Activated CD4-positive, alpha-beta memory T cell treated with anti-CD3 and anti-CD28 coated beads for 36 hours (primary cell): ENCODE measurements at regions of chr7 and their contacts with region 1.

Region 1: GRCh38 chr7:139431010-139431409 is 52.5 kb downstream of the KLRG2 start:
- DNase-seq: no peak
- H3K4me3 Mint-ChIP-seq: no peak overlapping the region
- H3K27ac Mint-ChIP-seq: no peak overlapping the region
- H3K4me1 Mint-ChIP-seq: peaks cover 4% of the 10 kb centered on the region
- H3K27me3 Mint-ChIP-seq: no peaks in the 10 kb centered on the region

Region 2: GRCh38 chr7:139394540-139394939 is 36.5 kb before region 1 on chr7:
- CTCF ChIA-PET with region 1: interaction called, 10 read pairs
- POLR2A ChIA-PET with region 1: no interaction called
- intact Hi-C with region 1: no loop called
- DNase-seq: no peak
- H3K4me3 Mint-ChIP-seq: no peak overlapping the region
- H3K27ac Mint-ChIP-seq: peak overlapping the region; percentile 40
- H3K4me1 Mint-ChIP-seq: peaks cover 38% of the 10 kb centered on the region
- H3K27me3 Mint-ChIP-seq: no peaks in the 10 kb centered on the region

Region 3: GRCh38 chr7:139407555-139407954 is 23.5 kb before region 1 on chr7:
- CTCF ChIA-PET with region 1: interaction called, 15 read pairs
- POLR2A ChIA-PET with region 1: no interaction called
- intact Hi-C with region 1: no loop called
- DNase-seq: no peak
- H3K4me3 Mint-ChIP-seq: no peak overlapping the region
- H3K27ac Mint-ChIP-seq: no peak overlapping the region
- H3K4me1 Mint-ChIP-seq: peaks cover 2% of the 10 kb centered on the region
- H3K27me3 Mint-ChIP-seq: no peaks in the 10 kb centered on the region

Region 4: DNA sequence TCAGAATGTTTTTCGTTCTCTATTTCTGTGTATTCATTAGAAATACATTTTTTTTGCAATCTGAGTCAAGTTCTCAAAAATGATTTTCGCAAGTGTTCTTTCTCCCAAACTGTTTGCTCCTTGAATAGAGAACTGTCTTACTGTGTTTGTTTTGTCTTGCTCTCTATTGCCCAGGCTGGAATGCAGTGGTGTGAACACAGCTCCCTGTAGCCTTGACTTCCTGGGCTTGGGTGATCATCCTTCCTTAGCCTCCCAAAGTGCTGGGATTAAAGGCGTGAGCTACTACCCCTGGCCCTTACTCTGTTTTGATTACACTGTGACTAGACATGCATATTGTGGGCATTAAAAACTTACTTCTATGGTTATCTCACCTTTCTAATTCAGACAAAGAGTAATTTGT is 14.6 kb before region 1 on chr7:
- CTCF ChIA-PET with region 1: interaction called, 43 read pairs
- POLR2A ChIA-PET with region 1: no interaction called
- intact Hi-C with region 1: no loop called
- DNase-seq: no peak
- H3K4me3 Mint-ChIP-seq: no peak overlapping the region
- H3K27ac Mint-ChIP-seq: no peak overlapping the region
- H3K4me1 Mint-ChIP-seq: no peaks in the 10 kb centered on the region
- H3K27me3 Mint-ChIP-seq: no peaks in the 10 kb centered on the region

Region 5: GRCh38 chr7:139452958-139453672 is 22.1 kb after region 1 on chr7:
- CTCF ChIA-PET with region 1: interaction called, 10 read pairs
- POLR2A ChIA-PET with region 1: no interaction called
- intact Hi-C with region 1: no loop called
- DNase-seq: no peak
- H3K4me3 Mint-ChIP-seq: no peak overlapping the region
- H3K27ac Mint-ChIP-seq: no peak overlapping the region
- H3K4me1 Mint-ChIP-seq: no peaks in the 10 kb centered on the region
- H3K27me3 Mint-ChIP-seq: no peaks in the 10 kb centered on the region

Region 6: DNA sequence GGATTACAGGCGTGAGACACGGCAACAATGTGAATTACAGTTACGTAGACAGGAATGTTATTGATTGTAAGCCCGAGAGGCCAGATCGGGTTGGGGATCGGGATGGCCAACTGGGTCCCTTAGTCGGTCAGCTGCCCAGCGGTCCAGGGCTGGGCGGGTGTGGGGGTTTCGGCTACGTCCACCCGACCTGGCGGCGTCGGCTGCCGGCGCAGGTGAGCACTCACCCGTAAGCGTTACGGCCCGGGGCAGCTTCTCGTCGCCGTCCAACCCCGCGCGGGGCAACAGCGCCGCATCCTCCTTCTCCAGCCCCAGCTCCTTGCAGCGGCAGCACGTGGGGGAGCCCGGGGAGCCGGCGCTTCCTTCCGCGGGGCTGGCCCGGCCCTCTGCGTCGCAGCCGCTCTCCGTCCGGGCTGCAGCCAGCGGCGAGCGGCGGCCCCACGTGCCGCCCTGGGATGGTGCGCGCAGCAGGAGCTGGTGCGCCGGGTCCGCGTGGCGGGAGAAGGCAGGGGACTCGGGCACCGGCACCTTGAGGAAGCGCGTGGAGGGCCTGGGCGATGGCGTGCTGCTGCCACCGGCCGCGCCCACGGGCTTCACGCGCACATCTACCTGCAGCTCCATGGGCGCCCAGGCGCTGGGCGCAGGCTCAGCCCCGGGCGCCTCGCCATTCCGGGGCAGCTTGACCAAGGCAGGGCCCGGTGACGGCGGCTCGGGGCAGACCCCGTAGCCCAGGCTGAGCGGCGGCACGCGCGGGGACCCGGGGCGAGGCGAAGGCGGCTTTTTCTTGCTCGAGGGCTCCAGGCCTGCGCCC is 51.9 kb after region 1 on chr7:
- CTCF ChIA-PET with region 1: interaction called, 10 read pairs
- POLR2A ChIA-PET with region 1: interaction called, 3 read pairs
- intact Hi-C with region 1: no loop called
- DNase-seq: peak; percentile 29
- H3K4me3 Mint-ChIP-seq: peak overlapping the region; percentile 32
- H3K27ac Mint-ChIP-seq: no peak overlapping the region
- H3K4me1 Mint-ChIP-seq: peaks cover 4% of the 10 kb centered on the region
- H3K27me3 Mint-ChIP-seq: peaks cover 27% of the 10 kb centered on the region

Region 7: GRCh38 chr7:139610595-139610994 is 179.6 kb after region 1 on chr7:
- CTCF ChIA-PET with region 1: no interaction called
- POLR2A ChIA-PET with region 1: no interaction called
- intact Hi-C with region 1: no loop called
- DNase-seq: no peak
- H3K4me3 Mint-ChIP-seq: no peak overlapping the region
- H3K27ac Mint-ChIP-seq: no peak overlapping the region
- H3K4me1 Mint-ChIP-seq: no peaks in the 10 kb centered on the region
- H3K27me3 Mint-ChIP-seq: no peaks in the 10 kb centered on the region

Region 8: DNA sequence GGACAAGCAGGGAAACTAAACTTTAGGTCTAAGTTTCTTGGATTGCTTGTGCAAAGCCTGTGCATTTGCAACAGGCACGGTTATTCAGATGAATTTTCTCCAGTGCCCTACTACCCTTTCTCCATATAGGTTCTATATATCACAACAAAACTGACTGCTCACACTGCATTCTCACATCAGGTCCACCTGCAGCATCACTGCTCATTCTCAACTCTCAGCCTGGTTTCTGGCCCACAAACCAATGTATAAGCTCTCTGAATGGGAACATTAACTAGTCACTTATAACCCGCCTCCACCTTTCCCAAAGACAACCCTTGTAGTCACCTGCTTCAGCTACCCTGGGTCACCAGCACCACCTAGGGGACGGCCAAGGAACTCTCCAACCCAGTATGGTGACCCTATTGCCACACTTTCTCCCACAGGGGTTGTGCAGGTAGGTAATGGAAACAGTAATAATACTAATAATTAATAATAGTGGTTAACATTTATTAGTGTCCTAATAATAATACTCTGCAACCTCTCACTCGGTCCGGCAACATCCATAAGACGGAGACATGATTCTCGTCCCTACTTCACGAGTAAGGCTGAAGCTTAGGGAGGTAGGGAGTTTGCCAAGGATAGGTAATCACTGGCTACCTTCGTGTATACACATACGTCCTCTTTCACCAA is 189.8 kb after region 1 on chr7:
- CTCF ChIA-PET with region 1: interaction called, 12 read pairs
- POLR2A ChIA-PET with region 1: no interaction called
- intact Hi-C with region 1: no loop called
- DNase-seq: peak; percentile 78
- H3K4me3 Mint-ChIP-seq: no peak overlapping the region
- H3K27ac Mint-ChIP-seq: no peak overlapping the region
- H3K4me1 Mint-ChIP-seq: peaks cover 12% of the 10 kb centered on the region
- H3K27me3 Mint-ChIP-seq: no peaks in the 10 kb centered on the region